ENCODE measurements at regions of chr1 and their contacts with region 1.

Region 1: GRCh38 chr1:154324669-154325582 is at the start of gene ATP8B2:
- DNase-seq: peak; percentile 76
- ATAC-seq: peak; percentile 68
- total RNA-seq, gene ATP8B2: 11.0 TPM

Region 2: DNA sequence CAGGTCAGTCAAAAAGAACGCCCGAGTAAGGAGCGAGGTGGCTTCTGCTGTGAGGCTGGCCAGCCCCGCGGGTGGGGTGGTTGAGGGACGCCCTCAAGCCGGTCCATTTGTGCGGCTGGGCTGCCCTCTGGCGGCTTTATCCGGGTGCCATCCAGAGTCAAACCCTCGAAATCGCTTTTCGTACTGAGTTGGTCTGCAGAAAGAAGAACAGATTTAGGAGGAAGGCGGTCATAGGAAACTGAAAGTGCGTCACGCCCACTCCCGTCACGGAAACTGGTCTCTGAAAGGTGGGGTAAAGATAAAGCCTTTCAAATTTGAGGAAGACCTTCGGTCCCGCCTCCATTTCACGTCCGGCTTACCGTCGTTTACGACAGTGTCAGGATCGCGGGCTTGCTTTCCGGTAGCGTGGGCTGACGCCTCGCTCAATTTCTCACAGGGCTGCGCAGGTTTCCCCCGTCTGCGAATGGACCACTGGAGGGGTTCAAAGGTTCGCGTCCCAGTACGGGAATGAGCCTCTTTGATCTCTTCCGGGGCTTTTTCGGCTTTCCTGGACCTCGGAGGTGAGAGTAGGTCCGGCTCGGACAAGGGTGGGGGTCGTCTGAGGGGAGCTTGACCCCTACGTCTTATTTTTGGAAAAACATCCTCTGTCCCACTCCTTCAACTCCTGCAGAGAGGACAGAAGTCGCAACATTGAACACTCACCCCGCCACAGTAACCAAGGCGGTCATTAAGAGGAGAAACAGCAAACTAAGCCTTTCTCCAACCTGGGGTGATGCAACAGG is 52.5 kb before region 1 on chr1 and contains the start of gene HAX1:
- intact Hi-C with region 1: loop called (anchors 10 kb)
- DNase-seq: peak; percentile 95
- ATAC-seq: peak; percentile 94
- total RNA-seq, gene HAX1: 166 TPM

Measured in Right ventricle myocardium superior (tissue), 1 donor.